Activated CD4-positive, alpha-beta memory T cell treated with anti-CD3 and anti-CD28 coated beads for 36 hours (primary cell): ENCODE measurements at regions of chr21 and their contacts with region 1.

Region 1: DNA sequence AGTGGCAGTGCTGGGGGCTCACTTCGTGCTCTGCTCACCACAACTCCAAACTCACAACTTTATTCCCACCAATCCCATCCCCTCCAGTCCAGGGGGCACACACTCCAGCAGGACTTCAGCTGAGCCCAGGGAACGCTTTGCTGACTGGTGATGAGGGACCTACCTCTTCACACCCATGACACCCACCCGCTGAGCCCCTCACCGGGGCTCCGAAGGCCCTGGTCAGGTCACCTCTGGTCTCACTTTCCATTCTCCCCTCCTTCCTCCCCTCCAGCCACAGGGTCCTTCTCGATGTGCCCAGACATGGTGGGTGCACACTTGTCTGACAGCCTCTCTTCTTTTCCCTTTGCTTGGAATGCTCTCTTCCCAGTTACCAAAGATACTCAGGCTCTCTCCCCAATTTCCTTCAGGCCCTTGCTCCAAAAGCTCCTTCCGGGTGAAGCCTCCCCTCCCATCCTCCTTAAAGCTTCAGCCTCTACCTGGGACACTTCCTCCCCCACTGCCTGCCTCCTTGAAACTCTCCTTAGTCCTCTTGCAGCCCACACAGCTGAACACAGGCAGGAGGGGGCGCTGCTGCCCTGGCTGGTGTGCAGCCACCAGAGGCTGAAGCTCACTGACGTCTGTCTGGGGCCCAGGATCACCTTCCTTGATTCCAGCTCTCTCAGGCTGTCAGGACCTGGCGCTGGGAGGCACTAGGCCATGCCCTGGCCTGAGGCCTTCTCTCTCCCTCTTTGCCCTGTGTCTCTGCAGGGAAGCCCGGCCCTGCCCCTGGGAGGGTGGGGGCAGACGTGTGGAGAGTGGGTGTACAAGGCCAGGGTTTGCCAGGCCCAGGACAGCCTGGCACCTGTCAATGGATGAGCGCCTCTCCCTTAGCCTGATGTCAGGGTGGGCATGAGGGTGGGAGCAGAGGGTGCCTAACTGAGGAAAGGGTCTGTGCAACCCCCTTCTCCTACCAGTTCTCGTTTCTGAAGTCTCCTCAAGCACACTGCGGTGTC is 1.6 kb downstream of the KCNE1 start:
- DNase-seq: peak; percentile 73
- H3K4me3 Mint-ChIP-seq: no peak overlapping the region
- H3K27ac Mint-ChIP-seq: no peak overlapping the region
- H3K4me1 Mint-ChIP-seq: no peaks in the 10 kb centered on the region
- H3K27me3 Mint-ChIP-seq: no peaks in the 10 kb centered on the region

Region 2: GRCh38 chr21:34609244-34609932 is 98.9 kb after region 1 on chr21:
- CTCF ChIA-PET with region 1: interaction called, 15 read pairs
- POLR2A ChIA-PET with region 1: no interaction called
- intact Hi-C with region 1: no loop called
- DNase-seq: peak; percentile 33
- H3K4me3 Mint-ChIP-seq: no peak overlapping the region
- H3K27ac Mint-ChIP-seq: no peak overlapping the region
- H3K4me1 Mint-ChIP-seq: peaks cover 20% of the 10 kb centered on the region
- H3K27me3 Mint-ChIP-seq: no peaks in the 10 kb centered on the region